Activated B cell treated with CpG ODN at 0.5 μM for 24 hours (primary cell): ENCODE measurements at regions of chr4 and their contacts with region 1.

Region 1: DNA sequence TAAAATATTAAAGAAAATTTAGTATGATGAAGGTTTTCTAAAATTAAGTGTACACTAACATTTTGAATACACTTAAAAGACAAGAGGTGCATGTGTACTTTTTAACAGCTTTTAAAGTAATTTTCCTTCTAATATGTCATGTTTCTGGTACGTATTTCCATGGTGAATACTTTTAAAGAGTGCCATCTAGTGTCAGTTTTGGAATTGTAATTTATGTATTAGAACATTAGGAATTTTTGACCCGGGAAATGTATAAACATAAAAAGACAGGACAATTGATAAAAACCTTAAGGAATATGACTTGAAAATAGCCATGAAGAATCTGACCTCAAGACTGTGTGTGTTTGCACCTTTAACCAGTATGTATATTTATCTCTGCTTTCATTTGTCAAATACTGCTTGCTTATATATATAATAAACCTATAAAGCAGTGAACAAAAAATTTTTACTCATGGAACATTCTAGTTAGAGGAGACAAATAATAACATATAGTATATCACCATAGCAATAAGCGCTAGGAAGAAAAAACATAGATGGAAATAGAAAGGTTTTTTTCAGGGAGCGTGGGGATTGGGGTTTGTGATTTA is 7.2 kb downstream of the GSTCD start:
- DNase-seq: no peak
- ATAC-seq: no peak
- H3K4me3 Mint-ChIP-seq: no peak overlapping the region
- H3K27ac Mint-ChIP-seq: no peak overlapping the region
- H3K4me1 Mint-ChIP-seq: peaks cover 15% of the 10 kb centered on the region
- H3K27me3 Mint-ChIP-seq: no peaks in the 10 kb centered on the region
- CTCF ChIP-seq: peak; percentile 29

Region 2: GRCh38 chr4:104930298-104930697 is 785.5 kb before region 1 on chr4:
- CTCF ChIA-PET with region 1: interaction called, 3 read pairs
- POLR2A ChIA-PET with region 1: no interaction called
- intact Hi-C with region 1: loop called (anchors 1 kb)
- DNase-seq: no peak
- ATAC-seq: no peak
- H3K4me3 Mint-ChIP-seq: no peak overlapping the region
- H3K27ac Mint-ChIP-seq: peak overlapping the region; percentile 63
- H3K4me1 Mint-ChIP-seq: peaks cover 27% of the 10 kb centered on the region
- H3K27me3 Mint-ChIP-seq: no peaks in the 10 kb centered on the region
- CTCF ChIP-seq: no peak

Region 3: DNA sequence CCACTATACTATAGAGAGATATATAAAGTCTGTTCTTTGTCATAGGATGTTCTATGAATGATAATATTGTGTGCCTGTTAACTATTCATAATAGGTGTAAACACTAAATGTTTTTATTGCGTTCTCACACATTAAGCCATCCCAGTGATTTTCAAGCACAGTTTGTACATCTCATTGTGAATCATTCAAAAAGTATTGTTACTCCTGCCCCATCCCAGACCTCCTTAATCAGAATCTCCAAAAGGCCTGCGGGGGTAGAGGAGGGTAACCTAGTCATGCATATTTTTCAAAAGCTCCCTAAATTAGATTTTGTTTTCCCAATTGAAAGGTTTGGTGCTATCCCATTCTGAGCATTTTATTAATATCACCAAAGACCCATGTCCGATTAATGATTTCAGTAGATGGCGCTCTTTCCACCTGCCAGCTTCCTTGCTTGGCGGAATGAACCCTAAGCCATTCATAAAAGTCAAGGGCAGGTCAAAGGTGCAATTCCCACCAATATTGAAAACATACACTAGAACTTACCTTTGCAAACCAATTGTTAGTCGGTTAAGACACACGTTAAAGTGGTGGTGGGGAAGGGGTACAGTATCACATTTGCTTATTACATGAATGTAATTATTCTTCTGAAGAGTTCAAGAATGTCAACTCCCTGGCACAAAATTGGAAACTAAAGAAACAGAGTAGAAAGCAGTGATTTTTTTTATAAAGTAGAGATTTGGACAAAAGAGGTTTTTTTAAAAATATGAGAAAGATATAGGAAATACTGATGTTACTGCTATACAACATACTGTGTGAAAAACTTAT is 574.9 kb before region 1 on chr4:
- CTCF ChIA-PET with region 1: interaction called, 4 read pairs
- POLR2A ChIA-PET with region 1: no interaction called
- intact Hi-C with region 1: loop called (anchors 1 kb)
- DNase-seq: no peak
- ATAC-seq: peak; percentile 28
- H3K4me3 Mint-ChIP-seq: no peak overlapping the region
- H3K27ac Mint-ChIP-seq: no peak overlapping the region
- H3K4me1 Mint-ChIP-seq: peaks cover 16% of the 10 kb centered on the region
- H3K27me3 Mint-ChIP-seq: no peaks in the 10 kb centered on the region
- CTCF ChIP-seq: no peak

Region 4: DNA sequence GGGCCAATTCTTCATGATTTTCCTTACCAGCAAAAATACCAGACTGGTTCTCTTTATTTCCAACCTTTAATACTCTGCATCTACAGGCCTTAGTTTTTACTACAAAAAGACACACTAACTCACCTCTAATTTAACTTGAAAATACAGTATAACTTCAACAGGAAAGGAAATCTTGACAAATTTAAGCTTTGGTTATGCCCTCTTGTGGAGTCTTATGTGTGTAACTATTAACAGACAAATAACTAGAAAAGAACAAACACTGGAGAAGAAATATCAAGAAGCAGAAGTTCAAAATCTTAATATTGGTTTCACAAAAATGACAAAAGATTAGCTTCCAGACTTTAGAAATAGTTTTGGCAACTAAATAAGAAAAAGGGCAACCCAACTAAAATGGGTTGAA is 274.9 kb before region 1 on chr4:
- CTCF ChIA-PET with region 1: no interaction called
- POLR2A ChIA-PET with region 1: no interaction called
- intact Hi-C with region 1: no loop called
- DNase-seq: no peak
- ATAC-seq: no peak
- H3K4me3 Mint-ChIP-seq: no peak overlapping the region
- H3K27ac Mint-ChIP-seq: no peak overlapping the region
- H3K4me1 Mint-ChIP-seq: no peaks in the 10 kb centered on the region
- H3K27me3 Mint-ChIP-seq: no peaks in the 10 kb centered on the region
- CTCF ChIP-seq: no peak

Region 5: GRCh38 chr4:105496899-105497298 is 218.9 kb before region 1 on chr4:
- CTCF ChIA-PET with region 1: interaction called, 8 read pairs
- POLR2A ChIA-PET with region 1: no interaction called
- intact Hi-C with region 1: loop called (anchors 1 kb)
- DNase-seq: no peak
- ATAC-seq: no peak
- H3K4me3 Mint-ChIP-seq: no peak overlapping the region
- H3K27ac Mint-ChIP-seq: no peak overlapping the region
- H3K4me1 Mint-ChIP-seq: peaks cover 4% of the 10 kb centered on the region
- H3K27me3 Mint-ChIP-seq: peaks cover 14% of the 10 kb centered on the region
- CTCF ChIP-seq: no peak

Region 6: DNA sequence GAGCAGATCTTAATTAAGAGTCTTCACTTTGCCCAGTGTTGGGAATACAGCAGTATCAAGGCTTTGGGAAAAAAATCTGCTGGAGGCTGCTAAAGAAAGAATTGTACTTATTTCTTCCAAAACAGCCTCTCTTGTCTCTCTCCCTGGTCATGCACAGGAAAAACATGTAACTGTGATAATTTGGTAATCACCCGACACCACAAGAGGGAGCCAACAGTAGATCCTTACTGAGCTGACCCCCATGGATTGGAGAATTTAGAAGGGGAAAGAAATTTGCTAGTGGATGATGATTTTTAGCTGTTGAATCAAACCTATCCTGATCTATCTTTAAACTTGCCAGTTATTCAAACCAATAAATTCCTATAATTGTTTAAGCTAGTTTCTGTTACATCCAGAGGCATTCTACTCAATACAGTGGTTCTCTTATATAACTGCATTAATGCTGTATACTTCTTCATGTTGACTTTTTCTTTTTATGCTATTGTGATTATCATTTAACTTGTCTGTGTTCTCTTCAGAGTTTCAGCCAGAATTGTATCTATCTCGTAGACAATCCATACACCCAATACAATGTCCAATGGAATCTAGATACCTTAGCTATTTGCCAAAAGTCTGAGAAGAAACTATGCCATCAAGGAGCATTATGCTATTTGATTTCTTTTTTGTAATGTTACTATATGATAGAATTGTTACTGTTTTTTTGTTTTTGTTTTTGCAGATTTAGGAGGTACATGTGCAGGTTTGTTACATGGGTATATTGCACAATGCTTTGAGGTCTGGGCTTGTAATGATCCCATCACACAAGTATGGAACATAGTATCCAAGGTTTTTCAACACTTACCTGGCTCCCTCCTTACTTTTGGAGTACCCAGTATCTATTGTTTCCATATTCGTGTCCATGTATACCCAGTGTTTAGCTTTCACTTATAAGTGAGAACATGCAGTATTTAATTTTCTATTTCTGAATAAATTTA is 194.7 kb before region 1 on chr4:
- CTCF ChIA-PET with region 1: interaction called, 29 read pairs
- POLR2A ChIA-PET with region 1: interaction called, 3 read pairs
- intact Hi-C with region 1: loop called (anchors 1 kb)
- DNase-seq: no peak
- ATAC-seq: no peak
- H3K4me3 Mint-ChIP-seq: no peak overlapping the region
- H3K27ac Mint-ChIP-seq: no peak overlapping the region
- H3K4me1 Mint-ChIP-seq: no peaks in the 10 kb centered on the region
- H3K27me3 Mint-ChIP-seq: no peaks in the 10 kb centered on the region
- CTCF ChIP-seq: no peak

Region 7: DNA sequence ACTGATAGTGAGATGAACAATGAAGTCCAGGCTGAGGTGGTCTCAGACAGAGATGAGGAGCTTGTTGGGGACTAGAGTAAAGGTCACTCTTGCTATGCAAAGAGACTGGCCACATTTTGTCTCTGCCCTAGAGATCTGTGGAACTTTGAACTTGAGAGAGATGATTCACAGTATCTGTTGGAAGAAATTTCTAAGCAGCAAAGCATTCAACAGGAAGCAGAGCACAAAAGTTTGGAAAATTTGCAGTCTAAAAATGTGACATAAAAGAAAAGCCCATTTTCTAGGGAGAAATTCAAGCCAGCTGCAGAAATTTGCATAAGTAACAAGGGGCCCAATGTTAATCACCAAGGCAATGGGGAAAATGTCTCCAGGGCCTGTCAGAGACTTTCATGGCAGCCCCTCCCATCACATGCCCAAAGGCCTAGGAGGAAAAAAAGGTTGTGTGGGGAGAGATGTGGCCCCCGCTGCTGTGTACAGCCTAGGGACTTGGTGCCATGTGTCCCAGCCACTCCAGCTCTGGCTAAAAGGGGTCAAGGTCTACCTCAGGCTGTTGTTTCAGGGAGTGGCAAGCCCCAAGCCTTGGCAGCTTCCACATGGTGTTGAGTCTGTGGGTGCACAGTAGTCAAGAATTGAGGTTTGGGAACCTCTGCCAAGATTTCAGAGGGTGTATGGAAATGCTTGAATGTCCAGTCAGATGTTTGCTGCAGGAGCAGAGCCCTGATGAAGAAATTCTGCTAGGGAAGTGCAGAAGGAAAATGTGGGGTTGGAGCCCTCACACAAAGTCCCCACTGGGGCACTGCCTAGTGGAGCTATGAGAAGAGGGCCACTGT is 1057.5 kb after region 1 on chr4:
- CTCF ChIA-PET with region 1: no interaction called
- POLR2A ChIA-PET with region 1: no interaction called
- intact Hi-C with region 1: no loop called
- DNase-seq: no peak
- ATAC-seq: no peak
- H3K4me3 Mint-ChIP-seq: no peak overlapping the region
- H3K27ac Mint-ChIP-seq: no peak overlapping the region
- H3K4me1 Mint-ChIP-seq: no peaks in the 10 kb centered on the region
- H3K27me3 Mint-ChIP-seq: no peaks in the 10 kb centered on the region
- CTCF ChIP-seq: no peak